Posterior vena cava (tissue), 2 donors: ENCODE measurements at regions of chr2 and their contacts with region 1.

Region 1: DNA sequence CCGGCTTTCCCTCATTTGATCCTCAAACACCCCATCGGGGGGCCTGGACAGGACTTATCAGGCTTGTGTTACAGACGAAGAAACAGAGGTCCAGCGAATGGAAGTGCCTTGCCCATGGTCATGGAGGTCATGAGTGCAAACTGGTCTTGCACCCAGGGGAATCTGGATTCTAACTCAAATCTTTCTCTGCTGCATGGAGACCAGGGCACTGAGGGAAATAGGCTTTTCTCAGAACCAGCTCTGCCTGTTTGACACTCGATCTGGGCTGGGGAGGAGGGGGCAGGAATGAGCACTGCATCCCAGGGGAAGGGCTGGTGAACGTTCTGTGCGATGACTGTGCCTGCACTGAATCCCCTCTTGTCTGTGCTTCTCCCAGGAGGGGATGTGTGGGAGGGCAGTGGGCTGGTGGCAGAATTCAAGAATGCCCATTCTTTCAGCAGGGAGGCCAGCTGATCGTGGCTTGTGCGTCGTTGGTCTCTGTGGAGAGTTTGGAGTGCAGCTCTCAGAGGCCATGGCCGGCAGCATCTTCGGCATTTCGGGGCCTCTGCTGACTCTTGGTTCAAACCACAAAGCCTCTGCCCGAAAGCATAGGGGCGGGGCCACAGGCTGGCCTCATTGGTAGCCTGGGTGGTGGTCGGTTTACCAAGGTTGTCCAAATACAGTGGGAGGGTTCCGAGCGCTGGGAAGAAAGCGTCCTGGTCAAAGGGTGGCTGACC is 171.6 kb downstream of the DDX1 start:
- DNase-seq: peak; percentile 78

Region 2: GRCh38 chr2:15835991-15836688 is 72.9 kb after region 1 on chr2:
- intact Hi-C with region 1: loop called in 1 of 2 experiments (anchors 2 kb)
- DNase-seq: peak; percentile 34

Region 3: DNA sequence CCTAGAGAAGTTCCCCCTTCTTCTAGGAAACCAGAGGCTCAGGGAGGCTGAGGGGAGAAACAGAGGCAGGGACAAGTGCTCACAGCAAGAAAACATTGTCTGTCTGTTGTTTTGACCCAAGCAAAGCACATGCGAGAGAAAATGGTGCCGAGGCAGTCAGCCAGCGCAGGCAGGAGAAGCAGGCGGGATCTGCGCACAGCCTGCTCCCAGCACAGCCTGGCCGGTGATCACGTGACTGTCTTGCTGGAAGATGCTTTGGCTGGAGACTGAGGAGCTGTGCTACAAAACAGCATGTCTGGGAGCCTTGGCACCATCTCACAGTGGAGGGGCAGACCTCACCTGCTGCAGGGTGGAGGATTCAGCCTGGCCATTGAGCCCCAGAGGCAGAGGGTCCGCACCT is 83.4 kb after region 1 on chr2:
- intact Hi-C with region 1: no loop called
- DNase-seq: no peak